ENCODE measurements at regions of chr5 and their contacts with region 1.

Region 1: GRCh38 chr5:140220032-140220697 is 45.2 kb downstream of the CYSTM1 start:
- DNase-seq: no peak
- ATAC-seq: no peak

Region 2: DNA sequence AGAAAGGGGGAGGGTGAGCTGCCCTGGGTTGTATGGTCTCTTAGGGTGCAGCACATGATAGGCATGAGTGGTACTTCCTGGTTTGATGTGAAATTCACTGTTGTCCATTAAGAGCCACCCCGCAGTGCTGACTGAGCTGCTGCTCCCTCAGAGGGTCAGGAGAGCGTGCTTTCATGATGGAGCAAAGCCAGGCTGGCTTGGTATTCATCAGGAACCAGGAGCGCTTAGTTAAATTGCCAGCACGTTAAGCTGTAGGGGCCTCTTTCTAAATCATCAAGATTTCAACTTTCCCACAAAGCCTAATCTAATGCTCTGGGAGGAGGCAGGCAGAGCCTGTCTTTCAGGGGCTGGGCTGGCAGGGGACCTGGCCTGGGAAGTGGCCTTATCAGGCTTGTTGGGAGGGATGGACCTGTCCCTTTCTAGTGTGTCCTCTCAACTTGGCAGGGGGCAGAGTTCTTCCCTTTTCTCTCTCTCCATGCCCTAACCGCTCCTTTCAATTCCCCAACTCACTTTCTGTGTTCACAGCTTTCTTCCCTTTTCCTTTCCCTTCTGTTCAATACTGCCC is 37.3 kb before region 1 on chr5:
- intact Hi-C with region 1: loop called in 1 of 2 experiments (anchors 5 kb)
- DNase-seq: peak; percentile 47
- ATAC-seq: peak; percentile 77 to 81

Region 3: DNA sequence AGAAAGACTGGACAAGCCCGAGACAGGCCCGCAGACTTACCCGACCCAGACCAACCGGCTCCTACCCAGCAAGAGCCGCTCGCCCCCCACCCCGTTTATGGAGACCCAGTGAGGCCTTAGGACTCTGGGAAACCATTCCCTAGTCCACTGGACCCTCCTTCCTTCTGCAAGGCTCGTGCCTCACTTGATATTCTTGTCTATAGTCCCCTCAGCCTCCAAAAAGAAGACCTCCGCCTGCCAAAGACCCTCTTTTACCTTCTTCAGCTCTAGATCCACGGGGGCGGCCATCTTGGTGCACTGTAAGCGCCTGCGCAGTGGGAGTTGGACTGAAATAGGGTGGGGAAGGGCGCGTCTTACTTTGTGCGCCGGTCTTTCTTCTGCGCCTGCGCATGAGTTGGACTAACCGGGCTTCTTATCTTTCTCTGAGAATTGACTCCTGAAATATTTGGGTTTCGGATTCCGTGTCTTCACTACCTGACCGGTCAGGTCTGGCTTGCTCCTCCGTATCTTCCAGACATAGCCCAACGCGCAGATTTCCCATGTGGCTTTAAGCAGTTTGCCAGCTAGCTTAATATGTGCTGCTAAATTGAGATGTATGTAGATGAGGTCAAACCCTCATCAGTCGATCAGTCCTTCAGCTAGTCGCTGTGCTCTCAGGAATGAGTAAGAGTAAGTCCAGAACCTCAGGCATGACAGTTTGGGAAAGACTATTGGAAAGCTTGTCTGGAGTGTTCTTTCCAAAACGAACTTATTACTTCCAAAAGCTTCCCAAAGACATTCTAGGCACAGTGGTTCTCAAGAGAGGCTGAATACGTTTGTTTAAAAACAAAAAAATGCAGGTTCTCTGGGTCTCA is 82.8 kb after region 1 on chr5 and contains the start of gene PFDN1:
- intact Hi-C with region 1: no loop called
- DNase-seq: peak; percentile 96
- ATAC-seq: peak; percentile 98 to 100
- total RNA-seq, gene PFDN1: 49.1 to 54.7 TPM